ENCODE measurements at regions of chr22 and their contacts with region 1.

Region 1: DNA sequence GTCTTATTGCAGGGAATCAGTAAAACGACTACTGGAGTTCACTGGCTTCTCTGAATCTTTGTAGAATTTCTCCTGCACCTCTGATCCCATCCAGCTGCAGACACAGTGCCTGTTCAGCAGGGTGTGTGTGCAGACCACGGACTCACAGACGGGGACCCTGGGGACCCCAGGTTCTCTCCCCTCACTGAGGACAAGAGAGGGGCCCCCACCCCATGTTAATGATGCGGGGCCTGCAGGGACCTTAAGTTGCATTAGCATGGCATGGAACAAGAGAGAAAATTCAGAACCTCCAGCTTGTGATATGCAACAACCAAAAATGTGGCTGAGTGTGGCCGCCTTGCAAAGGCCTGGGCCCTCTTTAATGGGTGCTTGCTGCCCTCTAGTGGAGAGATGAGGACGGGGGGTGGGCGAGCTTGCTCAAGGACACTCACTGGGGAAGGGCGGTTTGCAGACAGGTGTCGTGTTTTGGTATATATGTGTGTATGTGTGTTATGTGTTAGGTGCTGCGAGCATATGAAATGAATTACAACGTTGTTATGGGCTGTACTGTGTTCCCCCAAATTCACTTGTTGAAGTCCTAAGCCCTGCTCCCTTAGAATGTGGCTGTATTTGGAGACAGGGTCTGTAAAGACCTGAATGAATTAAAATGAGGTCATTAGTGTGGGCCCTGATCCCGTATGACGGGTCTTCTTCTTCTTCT is 84.4 kb upstream of the SEPTIN5 start:
- DNase-seq: peak; percentile 71
- ATAC-seq: peak; percentile 97
- H3K4me3 ChIP-seq: no peak overlapping the region
- H3K27ac ChIP-seq: no peak overlapping the region
- H3K4me1 ChIP-seq: no peaks in the 10 kb centered on the region
- H3K27me3 ChIP-seq: peaks cover 31% of the 10 kb centered on the region
- CTCF ChIP-seq: peak; percentile 96
- POLR2A ChIP-seq: peak; percentile 46; the same call in 1 of the 2 replicates
- RAD21 ChIP-seq: peak; percentile 98

Region 2: GRCh38 chr22:19143967-19144400 is 485.9 kb before region 1 on chr22:
- CTCF ChIA-PET with region 1: no interaction called
- POLR2A ChIA-PET with region 1: no interaction called
- dilution Hi-C with region 1: no loop called
- in situ Hi-C with region 1: no loop called
- intact Hi-C with region 1: loop called (anchors 1 kb)
- DNase-seq: peak; percentile 18
- ATAC-seq: no peak
- H3K4me3 ChIP-seq: peak overlapping the region; percentile 69
- H3K27ac ChIP-seq: peak overlapping the region; percentile 60
- H3K4me1 ChIP-seq: no peaks in the 10 kb centered on the region
- H3K27me3 ChIP-seq: peaks cover 21% of the 10 kb centered on the region
- CTCF ChIP-seq: no peak
- POLR2A ChIP-seq: no peak
- RAD21 ChIP-seq: no peak

Region 3: GRCh38 chr22:19178656-19179496 is 451.0 kb before region 1 on chr22 and contains the start of gene SLC25A1:
- CTCF ChIA-PET with region 1: interaction called, 4 read pairs
- POLR2A ChIA-PET with region 1: interaction called, 19 read pairs
- dilution Hi-C with region 1: no loop called
- in situ Hi-C with region 1: no loop called
- intact Hi-C with region 1: loop called (anchors 1 kb)
- DNase-seq: peak; percentile 80
- ATAC-seq: peak; percentile 90
- H3K4me3 ChIP-seq: peak within 1 kb of the TSS; percentile 94
- H3K27ac ChIP-seq: peak within 1 kb of the TSS; percentile 70
- H3K4me1 ChIP-seq: peaks cover 21% of the 10 kb centered on the region
- H3K27me3 ChIP-seq: no peaks in the 10 kb centered on the region
- CTCF ChIP-seq: no peak
- POLR2A ChIP-seq: peak; percentile 56
- RAD21 ChIP-seq: no peak
- total RNA-seq, gene SLC25A1: 41.0 and 46.1 TPM in 2 replicates

Region 4: DNA sequence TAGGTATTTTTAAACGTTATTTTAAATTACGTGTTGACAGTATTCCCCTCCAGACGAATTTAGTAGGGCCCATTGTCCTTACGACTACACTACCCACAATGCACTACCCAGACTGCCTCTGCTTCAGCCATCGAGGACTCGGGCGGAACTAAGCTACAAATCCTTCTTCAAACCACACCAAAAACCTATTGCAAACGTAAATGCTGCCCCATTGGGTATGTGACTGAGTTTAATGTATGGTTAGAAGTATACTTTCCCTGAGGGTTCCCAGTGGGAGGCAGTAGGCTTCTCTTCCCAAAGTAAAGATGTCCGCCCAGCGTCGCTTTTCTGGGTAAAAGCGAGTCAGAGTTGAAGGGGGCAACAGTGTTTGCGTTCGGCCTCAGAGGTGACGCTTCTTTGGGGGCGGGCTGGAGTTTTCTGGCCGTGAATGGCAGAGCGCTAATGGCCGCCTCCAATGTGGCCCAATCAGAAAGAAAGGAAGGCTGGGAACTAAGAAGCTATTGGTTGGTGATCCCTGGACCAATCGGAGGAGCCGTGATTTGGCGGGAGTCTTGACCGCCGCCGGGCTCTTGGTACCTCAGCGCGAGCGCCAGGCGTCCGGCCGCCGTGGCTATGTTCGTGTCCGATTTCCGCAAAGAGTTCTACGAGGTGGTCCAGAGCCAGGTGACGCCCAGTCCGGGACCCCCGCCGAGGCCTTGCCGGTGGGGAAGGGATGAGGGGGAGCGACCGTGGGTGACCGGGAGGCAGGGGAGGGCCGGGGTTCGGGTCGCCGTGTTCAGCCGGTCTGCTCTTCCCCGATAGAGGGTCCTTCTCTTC is 150.3 kb before region 1 on chr22 and contains the start of gene CDC45:
- CTCF ChIA-PET with region 1: interaction called, 3 read pairs
- POLR2A ChIA-PET with region 1: no interaction called
- dilution Hi-C with region 1: no loop called
- in situ Hi-C with region 1: no loop called
- intact Hi-C with region 1: loop called (anchors 5 kb)
- DNase-seq: peak; percentile 98
- ATAC-seq: peak; percentile 93
- H3K4me3 ChIP-seq: peak within 1 kb of the TSS; percentile 87
- H3K27ac ChIP-seq: peak within 1 kb of the TSS; percentile 95
- H3K4me1 ChIP-seq: peaks cover 3% of the 10 kb centered on the region
- H3K27me3 ChIP-seq: no peaks in the 10 kb centered on the region
- CTCF ChIP-seq: no peak
- POLR2A ChIP-seq: peak; percentile 39; the same call in 1 of the 2 replicates
- RAD21 ChIP-seq: no peak
- total RNA-seq, gene CDC45: 37.5 and 44.6 TPM in 2 replicates

Region 5: DNA sequence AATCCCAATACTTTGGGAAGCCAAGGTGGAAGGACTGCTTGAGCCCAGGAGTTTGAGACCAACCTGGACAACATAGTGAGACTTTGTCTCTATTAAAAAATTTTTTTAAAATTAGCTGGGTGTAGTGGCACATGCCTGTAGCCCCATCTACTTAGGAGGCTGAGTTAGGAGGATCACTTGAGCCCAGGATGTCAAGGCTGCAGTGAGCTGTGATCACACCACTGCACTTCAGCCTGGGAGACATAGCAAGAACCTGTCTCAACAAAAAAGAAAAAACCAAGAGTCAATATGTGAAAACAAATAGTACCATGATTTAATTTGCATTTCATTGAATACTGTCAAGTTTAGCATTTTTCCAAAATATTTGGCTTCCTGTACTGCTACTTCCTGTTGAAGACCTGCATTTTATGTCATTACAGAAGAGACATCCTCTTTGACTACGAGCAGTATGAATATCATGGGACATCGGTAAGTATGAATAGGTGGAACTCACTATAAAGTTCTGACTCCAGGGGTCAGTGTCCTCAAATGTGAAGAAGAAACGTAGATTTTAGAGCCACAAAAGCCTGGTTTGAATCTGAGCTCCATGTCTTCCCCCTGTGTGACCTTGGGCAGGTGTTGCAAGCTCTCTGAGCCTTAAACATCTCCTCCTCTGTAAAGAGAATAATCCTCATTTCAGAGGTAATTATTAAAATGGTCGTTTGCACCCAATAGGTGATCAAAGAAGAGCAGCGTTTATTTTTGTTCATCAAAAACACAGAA is 134.1 kb before region 1 on chr22:
- CTCF ChIA-PET with region 1: interaction called, 4 read pairs
- POLR2A ChIA-PET with region 1: no interaction called
- dilution Hi-C with region 1: no loop called
- in situ Hi-C with region 1: no loop called
- intact Hi-C with region 1: loop called (anchors 1 kb)
- DNase-seq: peak; percentile 50
- ATAC-seq: no peak
- H3K4me3 ChIP-seq: no peak overlapping the region
- H3K27ac ChIP-seq: no peak overlapping the region
- H3K4me1 ChIP-seq: peaks cover 3% of the 10 kb centered on the region
- H3K27me3 ChIP-seq: no peaks in the 10 kb centered on the region
- CTCF ChIP-seq: 0 out of 2 replicates have a peak, but pooled peaks have one; percentile 26
- POLR2A ChIP-seq: no peak
- RAD21 ChIP-seq: peak; percentile 39

Region 6: GRCh38 chr22:19717691-19718455 is 88.0 kb after region 1 on chr22:
- CTCF ChIA-PET with region 1: interaction called, 3 read pairs
- POLR2A ChIA-PET with region 1: no interaction called
- dilution Hi-C with region 1: no loop called
- in situ Hi-C with region 1: no loop called
- intact Hi-C with region 1: loop called (anchors 1 kb)
- DNase-seq: peak; percentile 52
- ATAC-seq: peak; percentile 90
- H3K4me3 ChIP-seq: peak overlapping the region; percentile 71
- H3K27ac ChIP-seq: peak overlapping the region; percentile 19; the same call in 1 of the 2 replicates
- H3K4me1 ChIP-seq: peaks cover 15% of the 10 kb centered on the region
- H3K27me3 ChIP-seq: peaks cover 16% of the 10 kb centered on the region
- CTCF ChIP-seq: peak; percentile 95
- POLR2A ChIP-seq: no peak
- RAD21 ChIP-seq: peak; percentile 87

Region 7: GRCh38 chr22:19903031-19903430 is 273.2 kb after region 1 on chr22:
- CTCF ChIA-PET with region 1: no interaction called
- POLR2A ChIA-PET with region 1: no interaction called
- dilution Hi-C with region 1: no loop called
- in situ Hi-C with region 1: no loop called
- intact Hi-C with region 1: no loop called
- DNase-seq: no peak
- ATAC-seq: peak; percentile 54
- H3K4me3 ChIP-seq: no peak overlapping the region
- H3K27ac ChIP-seq: no peak overlapping the region
- H3K4me1 ChIP-seq: peaks cover 7% of the 10 kb centered on the region
- H3K27me3 ChIP-seq: no peaks in the 10 kb centered on the region
- CTCF ChIP-seq: no peak
- POLR2A ChIP-seq: no peak
- RAD21 ChIP-seq: no peak

Region 8: GRCh38 chr22:21629262-21630149 is 1999.6 kb after region 1 on chr22 and contains the start of gene YDJC:
- CTCF ChIA-PET with region 1: no interaction called
- POLR2A ChIA-PET with region 1: no interaction called
- dilution Hi-C with region 1: no loop called
- in situ Hi-C with region 1: no loop called
- intact Hi-C with region 1: no loop called
- DNase-seq: peak; percentile 88
- ATAC-seq: peak; percentile 98
- H3K4me3 ChIP-seq: peak within 1 kb of the TSS; percentile 93
- H3K27ac ChIP-seq: peak within 1 kb of the TSS; percentile 64
- H3K4me1 ChIP-seq: peaks cover 4% of the 10 kb centered on the region
- H3K27me3 ChIP-seq: no peaks in the 10 kb centered on the region
- CTCF ChIP-seq: peak; percentile 56
- POLR2A ChIP-seq: peak; percentile 73
- RAD21 ChIP-seq: no peak; the same call in 1 of the 2 replicates
- total RNA-seq, gene YDJC: 7.2 and 8.1 TPM in 2 replicates

Measured in IMR-90 (cell line).